ENCODE measurements at regions of chr6 and their contacts with region 1.

Region 1: GRCh38 chr6:88982720-88983119 is 19.3 kb upstream of the RNGTT start:
- DNase-seq: peak; percentile 52
- H3K4me3 ChIP-seq: peak overlapping the region in 1 of 2 experiments; percentile 24; a peak in 1 of 4 replicates
- H3K27ac ChIP-seq: no peak overlapping the region
- H3K4me1 ChIP-seq: no peaks in the 10 kb centered on the region; a peak in 2 of 4 replicates
- H3K27me3 ChIP-seq: no peaks in the 10 kb centered on the region
- CTCF ChIP-seq: peak; percentile 89
- EP300 ChIP-seq: no peak
- RAD21 ChIP-seq: peak; percentile 94

Region 2: DNA sequence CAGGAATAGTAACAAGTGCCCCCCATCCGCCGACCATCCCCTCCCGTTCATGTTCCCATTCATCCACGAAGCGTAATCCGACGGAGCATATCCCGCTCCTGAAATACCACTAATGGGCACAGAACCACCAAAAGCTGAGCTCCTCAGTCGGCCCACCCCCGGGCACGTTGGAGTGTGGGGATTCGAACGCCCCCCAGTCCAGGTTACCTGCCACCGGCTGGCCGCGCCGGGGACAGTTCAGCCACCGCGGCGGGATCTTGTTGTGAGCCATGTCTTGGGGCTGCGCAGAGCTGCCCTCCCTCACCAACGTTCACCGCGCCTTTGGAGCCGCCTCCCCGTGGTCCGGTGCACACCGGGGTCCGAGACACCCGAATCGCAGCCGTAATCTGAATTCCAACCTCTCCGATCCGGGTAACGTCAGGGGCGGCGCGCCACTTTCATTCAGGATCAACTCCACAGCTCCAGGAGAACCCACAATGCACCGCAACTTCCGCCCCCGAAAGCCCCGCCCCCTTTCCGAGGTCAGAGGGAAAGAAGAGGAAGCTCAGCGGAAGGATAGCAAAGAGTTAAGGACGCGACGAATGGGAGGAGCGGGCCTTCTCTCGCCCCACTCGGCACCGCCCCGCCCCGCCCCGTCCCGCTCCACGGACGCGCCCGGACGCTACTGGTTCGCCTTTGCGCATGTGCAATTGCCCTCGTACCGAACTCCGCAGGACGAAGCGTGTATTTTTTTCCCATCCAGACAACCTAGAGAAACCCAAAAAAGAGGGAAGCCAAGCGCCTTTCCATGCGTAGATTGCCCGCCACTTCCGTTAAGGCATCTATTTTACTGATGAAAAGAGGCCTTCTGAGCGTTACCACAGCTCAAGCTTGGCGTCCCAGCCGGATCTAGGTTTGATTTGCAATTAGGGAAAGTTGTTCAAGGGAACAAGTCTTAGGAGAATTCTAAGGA is 19.3 kb before region 1 on chr6 and contains the start of gene RNGTT:
- CTCF ChIA-PET with region 1: interaction called, 13 read pairs
- POLR2A ChIA-PET with region 1: no interaction called
- DNase-seq: peak; percentile 97
- H3K4me3 ChIP-seq: peak within 1 kb of the TSS; percentile 89 to 98
- H3K27ac ChIP-seq: peak within 1 kb of the TSS; percentile 80 to 94
- H3K4me1 ChIP-seq: peaks cover 0 to 9% of the 10 kb centered on the region in 2 experiments; a peak in 1 of 4 replicates
- H3K27me3 ChIP-seq: no peaks in the 10 kb centered on the region
- CTCF ChIP-seq: no peak
- EP300 ChIP-seq: no peak
- RAD21 ChIP-seq: no peak
- polyA plus RNA-seq, gene RNGTT: 3.3 and 4.0 TPM in 2 replicates

Region 3: DNA sequence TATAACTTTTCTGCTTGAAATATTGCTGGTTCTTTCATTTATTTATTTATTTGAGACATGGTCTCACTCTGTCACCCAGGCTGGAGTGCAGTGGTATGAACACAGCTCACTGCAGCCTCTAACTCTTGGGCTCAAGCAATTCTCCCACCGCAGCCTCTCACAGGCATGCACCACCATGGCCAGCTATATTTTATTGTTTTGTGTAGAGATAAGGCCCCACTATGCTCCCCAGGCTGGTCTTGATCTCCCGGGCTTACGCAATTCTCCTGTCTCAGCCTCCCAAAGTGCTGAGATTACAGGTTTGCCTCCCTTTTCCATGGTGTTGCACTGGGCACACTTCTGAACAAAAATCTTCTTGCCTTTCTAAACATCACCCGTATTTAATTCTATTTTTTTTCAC is 19.8 kb after region 1 on chr6:
- CTCF ChIA-PET with region 1: interaction called, 20 read pairs
- POLR2A ChIA-PET with region 1: no interaction called
- DNase-seq: no peak
- H3K4me3 ChIP-seq: no peak overlapping the region
- H3K27ac ChIP-seq: no peak overlapping the region
- H3K4me1 ChIP-seq: no peaks in the 10 kb centered on the region
- H3K27me3 ChIP-seq: no peaks in the 10 kb centered on the region
- CTCF ChIP-seq: no peak
- EP300 ChIP-seq: no peak
- RAD21 ChIP-seq: no peak

Region 4: GRCh38 chr6:89080542-89081422 is 98.1 kb after region 1 on chr6 and contains the start of gene PNRC1:
- CTCF ChIA-PET with region 1: interaction called, 53 read pairs
- POLR2A ChIA-PET with region 1: interaction called, 4 read pairs
- DNase-seq: peak; percentile 93
- H3K4me3 ChIP-seq: peak within 1 kb of the TSS; percentile 93 to 95
- H3K27ac ChIP-seq: peak within 1 kb of the TSS; percentile 94 to 97
- H3K4me1 ChIP-seq: peaks cover 4 to 18% of the 10 kb centered on the region in 2 experiments; a peak in 2 of 4 replicates
- H3K27me3 ChIP-seq: no peaks in the 10 kb centered on the region
- CTCF ChIP-seq: no peak
- EP300 ChIP-seq: 0 out of 4 replicates have a peak, but pooled peaks of 1 of the 2 experiments have one; percentile 25
- RAD21 ChIP-seq: no peak
- polyA plus RNA-seq, gene PNRC1: 6.7 and 7.8 TPM in 2 replicates

Region 5: GRCh38 chr6:89122625-89123024 is 139.9 kb after region 1 on chr6:
- CTCF ChIA-PET with region 1: interaction called, 38 read pairs
- POLR2A ChIA-PET with region 1: no interaction called
- DNase-seq: peak; percentile 57
- H3K4me3 ChIP-seq: no peak overlapping the region
- H3K27ac ChIP-seq: no peak overlapping the region
- H3K4me1 ChIP-seq: peaks cover 0 to 4% of the 10 kb centered on the region in 2 experiments; a peak in 1 of 4 replicates
- H3K27me3 ChIP-seq: no peaks in the 10 kb centered on the region
- CTCF ChIP-seq: peak; percentile 68
- EP300 ChIP-seq: no peak
- RAD21 ChIP-seq: peak; percentile 92

Region 6: GRCh38 chr6:89242574-89243330 is 260.0 kb after region 1 on chr6:
- CTCF ChIA-PET with region 1: interaction called, 100 read pairs
- POLR2A ChIA-PET with region 1: no interaction called
- DNase-seq: peak; percentile 61
- H3K4me3 ChIP-seq: no peak overlapping the region
- H3K27ac ChIP-seq: no peak overlapping the region
- H3K4me1 ChIP-seq: no peaks in the 10 kb centered on the region; a peak in 1 of 4 replicates
- H3K27me3 ChIP-seq: no peaks in the 10 kb centered on the region
- CTCF ChIP-seq: peak; percentile 69
- EP300 ChIP-seq: no peak
- RAD21 ChIP-seq: peak; percentile 86

Region 7: GRCh38 chr6:89371849-89372505 is 389.3 kb after region 1 on chr6:
- CTCF ChIA-PET with region 1: interaction called, 22 read pairs
- POLR2A ChIA-PET with region 1: no interaction called
- DNase-seq: peak; percentile 74
- H3K4me3 ChIP-seq: no peak overlapping the region; a peak in 1 of 4 replicates
- H3K27ac ChIP-seq: no peak overlapping the region
- H3K4me1 ChIP-seq: peaks cover 0 to 8% of the 10 kb centered on the region in 2 experiments; a peak in 2 of 4 replicates
- H3K27me3 ChIP-seq: no peaks in the 10 kb centered on the region
- CTCF ChIP-seq: peak; percentile 89
- EP300 ChIP-seq: peak in 1 of 2 experiments; percentile 31; a peak in 1 of 4 replicates
- RAD21 ChIP-seq: peak; percentile 79

Measured in SK-N-SH (cell line).